Endothelial cell of umbilical vein (primary cell): ENCODE measurements at regions of chr3 and their contacts with region 1.

Region 1: DNA sequence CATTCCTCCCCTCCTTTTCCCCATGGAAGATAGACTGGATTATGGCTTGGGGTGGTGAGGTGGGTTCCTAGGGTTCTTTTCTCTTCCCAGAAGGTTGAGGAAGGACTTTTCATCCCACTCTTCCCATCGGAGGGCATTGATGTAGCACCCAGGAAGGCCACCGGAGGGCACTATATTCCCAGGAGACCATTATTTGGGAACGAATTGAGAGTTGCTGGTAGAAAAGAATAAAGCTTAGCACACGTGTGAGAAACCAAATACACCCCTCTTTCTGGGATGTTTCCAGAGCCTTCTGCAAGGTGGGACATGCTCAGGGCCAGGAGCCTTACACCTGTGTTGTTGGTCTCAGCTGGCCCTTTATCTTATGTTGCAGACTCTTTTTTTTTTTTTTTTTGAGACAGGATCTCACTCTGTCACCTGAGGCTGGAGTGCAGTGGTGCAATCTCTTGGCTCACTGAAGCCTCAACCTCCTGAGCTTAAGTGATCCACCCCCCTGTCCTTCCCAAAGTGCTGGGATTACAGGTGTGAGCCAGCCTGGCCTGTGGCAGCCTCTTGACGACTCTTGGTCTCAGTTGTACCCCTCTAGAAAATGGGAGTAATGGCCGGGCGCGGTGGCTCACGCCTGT is 6.3 kb upstream of the CDC25A start:
- DNase-seq: peak; percentile 63
- H3K4me3 ChIP-seq: no peak overlapping the region
- H3K27ac ChIP-seq: no peak overlapping the region
- H3K4me1 ChIP-seq: no peaks in the 10 kb centered on the region
- H3K27me3 ChIP-seq: peaks cover 0 to 5% of the 10 kb centered on the region in 2 experiments
- CTCF ChIP-seq: peak; percentile 70 to 79
- POLR2A ChIP-seq: no peak

Region 2: GRCh38 chr3:48088749-48089466 is 105.7 kb before region 1 on chr3:
- CTCF ChIA-PET with region 1: no interaction called
- POLR2A ChIA-PET with region 1: no interaction called
- dilution Hi-C with region 1: no loop called
- intact Hi-C with region 1: no loop called
- DNase-seq: peak; percentile 99
- H3K4me3 ChIP-seq: peak overlapping the region; percentile 83 to 94 (median 94)
- H3K27ac ChIP-seq: peak overlapping the region; percentile 70
- H3K4me1 ChIP-seq: peaks cover 18% of the 10 kb centered on the region
- H3K27me3 ChIP-seq: no peaks in the 10 kb centered on the region
- CTCF ChIP-seq: no peak
- POLR2A ChIP-seq: peak; percentile 80

Region 3: DNA sequence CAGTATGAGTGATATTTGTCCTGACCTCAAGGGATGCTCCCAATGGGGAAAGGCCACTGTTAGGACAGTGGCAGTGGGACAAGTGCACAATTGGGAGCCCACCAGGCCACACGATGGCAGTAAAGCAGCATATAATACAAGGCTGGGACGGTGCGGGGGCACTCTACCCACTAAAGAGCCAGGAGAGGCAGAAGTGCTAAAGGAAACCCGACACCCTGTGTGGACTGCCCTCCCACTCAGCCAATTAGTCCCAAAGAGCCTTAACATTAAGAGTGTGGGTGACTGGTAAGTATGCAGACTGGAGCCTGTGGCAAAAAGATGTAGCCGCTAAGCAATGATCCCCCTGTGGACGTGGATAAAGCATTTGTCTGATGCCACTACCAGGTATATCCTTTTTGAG is 38.2 kb after region 1 on chr3:
- CTCF ChIA-PET with region 1: interaction called, 8 read pairs
- POLR2A ChIA-PET with region 1: no interaction called
- dilution Hi-C with region 1: no loop called
- intact Hi-C with region 1: loop called (anchors 1 kb)
- DNase-seq: peak; percentile 69
- H3K4me3 ChIP-seq: no peak overlapping the region
- H3K27ac ChIP-seq: no peak overlapping the region
- H3K4me1 ChIP-seq: peaks cover 3% of the 10 kb centered on the region
- H3K27me3 ChIP-seq: no peaks in the 10 kb centered on the region
- CTCF ChIP-seq: peak; percentile 63 to 64
- POLR2A ChIP-seq: no peak

Region 4: GRCh38 chr3:48273594-48274211 is 79.1 kb after region 1 on chr3:
- CTCF ChIA-PET with region 1: interaction called, 9 read pairs
- POLR2A ChIA-PET with region 1: no interaction called
- dilution Hi-C with region 1: no loop called
- intact Hi-C with region 1: loop called (anchors 10 kb)
- DNase-seq: peak; percentile 76
- H3K4me3 ChIP-seq: no peak overlapping the region
- H3K27ac ChIP-seq: no peak overlapping the region
- H3K4me1 ChIP-seq: no peaks in the 10 kb centered on the region
- H3K27me3 ChIP-seq: no peaks in the 10 kb centered on the region
- CTCF ChIP-seq: peak; percentile 64 to 73
- POLR2A ChIP-seq: no peak

Region 5: GRCh38 chr3:48429317-48429959 is 234.9 kb after region 1 on chr3:
- CTCF ChIA-PET with region 1: interaction called, 10 read pairs
- POLR2A ChIA-PET with region 1: no interaction called
- dilution Hi-C with region 1: no loop called
- intact Hi-C with region 1: no loop called
- DNase-seq: peak; percentile 28
- H3K4me3 ChIP-seq: peak overlapping the region; percentile 49 to 74 (median 62)
- H3K27ac ChIP-seq: peak overlapping the region; percentile 33
- H3K4me1 ChIP-seq: peaks cover 10% of the 10 kb centered on the region
- H3K27me3 ChIP-seq: no peaks in the 10 kb centered on the region
- CTCF ChIP-seq: no peak
- POLR2A ChIP-seq: peak; percentile 55

Region 6: DNA sequence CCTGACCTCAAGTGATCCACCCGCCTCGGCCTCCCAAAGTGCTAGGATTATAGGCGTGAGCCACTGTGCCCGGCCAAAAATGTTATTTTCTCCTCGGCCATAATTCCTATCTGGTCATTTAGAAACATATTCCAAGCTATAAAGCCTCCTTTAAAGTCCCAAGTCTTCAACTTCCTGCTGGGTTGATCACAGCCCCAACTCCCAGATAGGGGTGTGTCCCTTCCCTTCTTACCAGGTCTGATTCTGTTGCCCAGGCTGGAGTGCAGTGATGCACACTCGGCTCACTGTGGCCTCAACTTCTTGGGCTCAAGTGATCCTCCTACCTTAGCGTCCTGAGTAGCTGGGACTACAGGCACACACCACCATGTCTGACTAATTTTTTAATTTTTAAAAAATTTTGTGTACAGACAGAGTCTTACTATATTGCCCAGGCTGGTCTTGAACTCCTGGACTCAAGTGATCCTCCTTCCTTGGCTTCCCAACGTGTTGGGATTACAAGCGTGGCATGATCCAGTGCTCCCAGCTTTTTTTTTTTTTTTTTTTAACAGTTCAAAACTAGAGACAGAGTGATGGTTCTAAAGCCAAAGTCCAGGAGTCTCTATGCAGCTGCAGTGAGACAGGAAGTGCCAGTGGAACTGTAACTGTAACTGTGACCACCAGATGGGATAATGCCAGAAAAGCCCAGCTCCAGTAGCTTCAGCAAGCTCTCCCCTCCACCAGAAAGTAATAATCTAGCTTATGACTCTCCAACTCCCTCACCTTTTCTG is 661.3 kb after region 1 on chr3:
- CTCF ChIA-PET with region 1: no interaction called
- POLR2A ChIA-PET with region 1: no interaction called
- dilution Hi-C with region 1: no loop called
- intact Hi-C with region 1: no loop called
- DNase-seq: no peak
- H3K4me3 ChIP-seq: no peak overlapping the region
- H3K27ac ChIP-seq: no peak overlapping the region
- H3K4me1 ChIP-seq: no peaks in the 10 kb centered on the region
- H3K27me3 ChIP-seq: no peaks in the 10 kb centered on the region
- CTCF ChIP-seq: no peak
- POLR2A ChIP-seq: no peak